B cell (primary cell): ENCODE measurements at regions of chr9 and their contacts with region 1.

Region 1: DNA sequence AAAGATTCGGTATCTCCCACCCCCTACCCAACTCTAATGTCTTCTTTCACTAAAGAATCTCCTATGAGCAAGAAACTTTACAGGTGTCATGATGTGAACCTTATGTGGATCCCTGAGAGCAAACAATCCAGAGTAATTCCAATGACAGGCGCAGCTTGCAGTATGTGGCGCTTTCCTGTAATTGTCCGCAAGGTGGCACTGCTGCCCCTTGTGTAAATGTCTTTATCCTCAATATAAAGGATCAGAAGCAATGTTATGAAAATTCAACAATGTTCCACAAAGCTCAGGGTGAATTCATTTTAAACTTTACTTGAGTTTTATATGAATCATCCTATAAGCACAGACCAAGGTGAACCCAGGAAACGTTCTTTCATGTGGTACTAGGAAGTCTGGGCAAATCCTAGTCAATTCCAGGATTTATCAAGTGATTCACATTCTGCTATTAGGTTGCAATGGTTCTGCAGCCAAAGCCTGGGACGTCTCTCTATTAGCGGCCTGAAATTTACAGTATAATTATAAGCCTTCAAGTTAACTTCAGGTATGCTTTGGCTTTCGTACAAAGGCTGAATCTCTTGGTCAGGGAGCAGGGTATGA is 113.7 kb downstream of the TRPM6 start:
- DNase-seq: peak; percentile 75
- ATAC-seq: peak; percentile 65
- H3K4me3 ChIP-seq: no peak overlapping the region
- H3K4me3 Mint-ChIP-seq: no peak overlapping the region
- H3K27ac ChIP-seq: no peak overlapping the region
- H3K27ac Mint-ChIP-seq: no peak overlapping the region
- H3K4me1 ChIP-seq: no peaks in the 10 kb centered on the region
- H3K4me1 Mint-ChIP-seq: no peaks in the 10 kb centered on the region
- H3K27me3 ChIP-seq: peaks cover 0 to 6% (median 2%) of the 10 kb centered on the region in 4 experiments
- H3K27me3 Mint-ChIP-seq: peaks cover 20% of the 10 kb centered on the region
- CTCF ChIP-seq: peak; percentile 97

Region 2: DNA sequence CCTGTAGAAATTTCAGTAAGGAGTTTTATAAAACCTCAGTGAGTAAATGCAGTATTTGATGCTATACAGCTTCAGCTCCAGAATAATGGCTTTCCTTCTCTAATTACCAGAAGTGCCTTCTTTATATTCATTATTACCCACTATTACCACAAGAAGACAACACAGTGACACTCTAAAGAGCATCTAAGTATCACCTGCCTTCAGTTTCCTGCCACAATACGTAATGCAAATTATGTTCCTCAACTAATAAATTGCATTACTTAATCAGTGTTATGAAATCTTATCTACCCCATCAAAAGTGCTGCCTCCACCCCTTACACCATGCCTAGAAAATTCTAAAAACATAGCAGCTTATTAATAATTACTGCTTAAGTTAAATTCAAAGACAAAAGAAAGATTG is 21.8 kb after region 1 on chr9:
- CTCF ChIA-PET with region 1: interaction called, 14 read pairs
- POLR2A ChIA-PET with region 1: no interaction called
- intact Hi-C with region 1: no loop called
- DNase-seq: no peak
- ATAC-seq: no peak
- H3K4me3 ChIP-seq: no peak overlapping the region
- H3K4me3 Mint-ChIP-seq: no peak overlapping the region
- H3K27ac ChIP-seq: no peak overlapping the region
- H3K27ac Mint-ChIP-seq: no peak overlapping the region
- H3K4me1 ChIP-seq: no peaks in the 10 kb centered on the region
- H3K4me1 Mint-ChIP-seq: no peaks in the 10 kb centered on the region
- H3K27me3 ChIP-seq: no peaks in the 10 kb centered on the region
- H3K27me3 Mint-ChIP-seq: peaks cover 18% of the 10 kb centered on the region
- CTCF ChIP-seq: no peak

Region 3: DNA sequence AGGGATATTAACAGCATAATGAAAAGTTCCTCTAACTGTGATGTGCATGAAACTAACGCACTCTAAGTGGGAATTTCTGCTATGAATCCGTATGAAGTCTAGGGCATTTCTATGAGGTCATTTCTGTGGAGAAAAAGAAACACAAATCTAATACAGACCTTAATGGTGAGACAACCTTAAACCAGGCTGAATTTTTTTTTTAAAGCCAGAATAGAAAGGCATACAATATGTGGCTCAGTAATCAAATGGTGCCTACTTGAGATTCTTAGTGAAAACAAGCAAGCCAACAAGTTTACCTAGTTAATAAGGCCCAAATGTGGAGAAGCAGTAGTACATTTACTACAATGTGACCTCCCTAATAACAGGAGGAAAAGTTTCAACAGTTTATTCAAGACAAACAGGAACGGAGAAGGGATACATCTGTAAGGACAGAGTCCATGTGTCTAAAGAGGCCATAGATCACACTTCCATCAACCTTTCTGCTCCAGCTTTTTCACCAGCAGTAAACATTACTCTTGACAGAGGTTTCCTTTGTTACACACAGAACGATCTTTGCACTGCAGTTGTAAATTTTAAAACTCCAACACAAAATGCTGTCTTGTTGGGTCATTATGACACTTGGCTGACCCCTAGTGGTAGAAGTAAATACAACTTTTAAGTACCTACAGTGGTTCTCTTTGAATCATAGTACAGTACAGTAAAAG is 227.9 kb after region 1 on chr9:
- CTCF ChIA-PET with region 1: interaction called, 335 read pairs
- POLR2A ChIA-PET with region 1: no interaction called
- intact Hi-C with region 1: loop called (anchors 1 kb)
- DNase-seq: peak; percentile 84
- ATAC-seq: peak; percentile 84
- H3K4me3 ChIP-seq: no peak overlapping the region
- H3K4me3 Mint-ChIP-seq: no peak overlapping the region
- H3K27ac ChIP-seq: no peak overlapping the region
- H3K27ac Mint-ChIP-seq: no peak overlapping the region
- H3K4me1 ChIP-seq: no peaks in the 10 kb centered on the region
- H3K4me1 Mint-ChIP-seq: peaks cover 5% of the 10 kb centered on the region
- H3K27me3 ChIP-seq: no peaks in the 10 kb centered on the region
- H3K27me3 Mint-ChIP-seq: no peaks in the 10 kb centered on the region
- CTCF ChIP-seq: peak; percentile 95

Region 4: DNA sequence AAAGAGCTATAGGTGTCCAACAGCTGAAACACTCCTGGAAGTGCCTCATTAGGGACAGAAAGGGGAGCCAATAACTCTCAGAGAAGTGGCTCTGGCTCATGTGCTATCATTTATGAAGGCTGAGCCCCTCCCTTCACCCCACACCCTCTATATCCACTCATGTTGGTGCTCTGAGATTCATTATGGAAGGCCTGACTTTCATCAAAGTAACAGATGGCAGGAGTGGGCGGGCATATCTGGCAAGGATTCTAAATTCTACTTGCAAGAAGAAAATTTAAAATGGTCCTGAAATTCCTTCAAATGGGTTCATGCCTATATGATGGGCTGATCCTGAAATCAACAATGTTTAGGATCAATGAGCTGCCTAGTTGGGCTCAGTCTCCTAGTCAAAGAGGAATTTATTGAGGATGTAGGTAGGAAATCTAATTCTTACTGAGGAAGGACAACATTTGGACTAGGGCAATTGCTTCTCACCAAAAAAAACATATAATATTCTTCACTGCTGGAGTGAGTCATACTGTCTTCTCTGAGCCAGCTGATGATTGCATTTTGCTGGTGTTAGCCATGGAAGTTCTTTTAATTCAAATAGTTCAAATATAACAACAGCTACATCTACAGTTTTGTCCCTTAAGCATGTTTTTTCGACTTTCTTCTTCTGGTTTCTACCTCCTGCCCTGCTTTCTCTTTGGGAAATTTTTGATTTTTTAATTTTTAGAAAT is 290.5 kb after region 1 on chr9:
- CTCF ChIA-PET with region 1: interaction called, 13 read pairs
- POLR2A ChIA-PET with region 1: no interaction called
- intact Hi-C with region 1: no loop called
- DNase-seq: no peak
- ATAC-seq: no peak
- H3K4me3 ChIP-seq: no peak overlapping the region
- H3K4me3 Mint-ChIP-seq: no peak overlapping the region
- H3K27ac ChIP-seq: no peak overlapping the region
- H3K27ac Mint-ChIP-seq: no peak overlapping the region
- H3K4me1 ChIP-seq: no peaks in the 10 kb centered on the region
- H3K4me1 Mint-ChIP-seq: no peaks in the 10 kb centered on the region
- H3K27me3 ChIP-seq: no peaks in the 10 kb centered on the region
- H3K27me3 Mint-ChIP-seq: no peaks in the 10 kb centered on the region
- CTCF ChIP-seq: no peak

Region 5: GRCh38 chr9:75083188-75083970 is 309.4 kb after region 1 on chr9:
- CTCF ChIA-PET with region 1: interaction called, 226 read pairs
- POLR2A ChIA-PET with region 1: no interaction called
- intact Hi-C with region 1: no loop called
- DNase-seq: no peak
- ATAC-seq: no peak
- H3K4me3 ChIP-seq: no peak overlapping the region
- H3K4me3 Mint-ChIP-seq: no peak overlapping the region
- H3K27ac ChIP-seq: no peak overlapping the region
- H3K27ac Mint-ChIP-seq: no peak overlapping the region
- H3K4me1 ChIP-seq: peaks cover 20 to 25% of the 10 kb centered on the region in 2 donors
- H3K4me1 Mint-ChIP-seq: peaks cover 11% of the 10 kb centered on the region
- H3K27me3 ChIP-seq: no peaks in the 10 kb centered on the region
- H3K27me3 Mint-ChIP-seq: no peaks in the 10 kb centered on the region
- CTCF ChIP-seq: no peak

Region 6: DNA sequence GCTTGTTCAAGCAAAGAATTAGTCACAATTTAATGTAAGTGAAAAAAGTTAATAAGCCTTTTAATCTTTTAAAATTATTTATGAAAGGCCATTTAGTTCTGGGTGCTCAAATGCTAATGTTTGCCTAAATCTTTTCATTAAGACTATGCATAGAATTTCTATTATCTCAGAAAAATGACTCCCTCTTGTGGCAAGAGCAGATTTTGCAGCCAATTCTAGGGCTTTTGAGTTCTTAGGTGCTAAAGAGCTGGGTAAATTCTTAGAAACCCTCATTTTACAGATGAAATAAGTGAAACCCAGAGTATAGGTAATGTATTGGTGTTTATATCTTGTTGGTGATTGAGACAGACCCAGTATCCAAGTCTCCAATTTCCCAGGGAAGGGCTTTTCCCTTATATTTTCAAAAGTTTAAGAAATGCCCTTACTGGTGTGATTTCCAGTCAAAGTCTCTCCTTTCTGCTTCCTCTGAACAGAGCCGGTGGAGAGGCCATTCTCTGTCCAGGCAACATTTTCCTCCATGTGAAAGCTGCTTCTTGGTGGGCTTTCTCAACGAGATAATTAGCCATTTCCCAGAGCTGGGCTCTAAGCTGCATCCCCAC is 1092.4 kb after region 1 on chr9:
- CTCF ChIA-PET with region 1: interaction called, 3 read pairs
- POLR2A ChIA-PET with region 1: no interaction called
- intact Hi-C with region 1: loop called (anchors 5 kb)
- DNase-seq: peak; percentile 23
- ATAC-seq: no peak
- H3K4me3 ChIP-seq: no peak overlapping the region
- H3K4me3 Mint-ChIP-seq: no peak overlapping the region
- H3K27ac ChIP-seq: no peak overlapping the region
- H3K27ac Mint-ChIP-seq: no peak overlapping the region
- H3K4me1 ChIP-seq: no peaks in the 10 kb centered on the region
- H3K4me1 Mint-ChIP-seq: no peaks in the 10 kb centered on the region
- H3K27me3 ChIP-seq: no peaks in the 10 kb centered on the region
- H3K27me3 Mint-ChIP-seq: peaks cover 7% of the 10 kb centered on the region
- CTCF ChIP-seq: peak; percentile 86